Common myeloid progenitor, CD34-positive (primary cell): ENCODE measurements at regions of chr16 and their contacts with region 1.

Region 1: GRCh38 chr16:57576429-57576870 is 34.0 kb downstream of the ADGRG5 start:
- DNase-seq: peak; percentile 73 to 86 (median 79)
- H3K4me3 ChIP-seq: no peak overlapping the region
- H3K27ac ChIP-seq: no peak overlapping the region
- H3K4me1 ChIP-seq: peaks cover 0 to 48% (median 31%) of the 10 kb centered on the region in 4 experiments
- H3K27me3 ChIP-seq: no peaks in the 10 kb centered on the region

Region 2: DNA sequence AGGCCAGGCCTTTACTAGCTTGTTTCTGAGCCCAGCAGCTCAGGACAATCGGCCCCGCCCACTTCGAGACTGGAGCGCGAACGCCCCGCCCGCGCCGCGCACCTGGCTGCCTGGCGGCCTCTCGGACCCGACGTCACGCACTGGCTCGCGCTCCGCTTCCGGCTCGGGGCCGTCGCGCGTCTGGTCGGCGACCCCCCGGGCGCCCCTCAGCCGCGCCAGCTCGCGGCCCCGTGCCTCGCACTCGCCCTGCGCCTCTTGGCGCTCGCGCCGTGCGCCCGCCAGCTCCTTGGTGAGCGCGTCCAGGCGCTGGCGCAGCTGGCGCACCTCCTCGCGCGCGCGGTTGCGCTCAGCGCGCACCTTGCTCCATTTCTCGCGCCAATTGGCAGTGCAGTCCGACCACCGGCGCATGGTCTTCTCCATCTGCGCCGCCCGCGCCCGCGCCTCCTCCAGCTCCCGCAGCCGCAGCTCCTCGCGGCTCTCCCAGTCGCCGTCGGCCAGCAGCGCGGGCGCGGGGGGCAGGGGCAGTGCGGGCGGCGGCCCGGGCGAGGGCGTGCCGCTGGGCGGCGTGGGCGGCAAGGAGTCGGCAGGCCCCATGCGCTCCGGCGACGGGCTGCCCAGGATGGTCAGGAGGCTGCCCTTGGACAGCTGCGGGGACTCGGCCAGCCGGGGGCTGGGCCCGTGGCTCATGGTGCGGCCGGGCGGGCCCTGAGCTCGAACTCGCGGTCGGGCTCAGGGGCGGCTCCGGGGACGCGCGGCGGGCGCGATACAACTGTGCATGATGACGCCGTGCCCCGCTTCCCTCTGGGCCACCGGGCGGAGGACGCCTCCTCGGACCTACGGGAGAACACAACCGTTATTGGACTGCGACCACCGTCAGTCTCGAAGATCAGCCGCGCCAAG is 47.7 kb before region 1 on chr16:
- CTCF ChIA-PET with region 1: interaction called, 20 read pairs
- POLR2A ChIA-PET with region 1: no interaction called
- DNase-seq: no peak
- H3K4me3 ChIP-seq: peak overlapping the region in 1 of 7 experiments; percentile 11
- H3K27ac ChIP-seq: peak overlapping the region in 1 of 2 experiments; percentile 61
- H3K4me1 ChIP-seq: peaks cover 3 to 58% (median 56%) of the 10 kb centered on the region in 4 experiments
- H3K27me3 ChIP-seq: no peaks in the 10 kb centered on the region

Region 3: DNA sequence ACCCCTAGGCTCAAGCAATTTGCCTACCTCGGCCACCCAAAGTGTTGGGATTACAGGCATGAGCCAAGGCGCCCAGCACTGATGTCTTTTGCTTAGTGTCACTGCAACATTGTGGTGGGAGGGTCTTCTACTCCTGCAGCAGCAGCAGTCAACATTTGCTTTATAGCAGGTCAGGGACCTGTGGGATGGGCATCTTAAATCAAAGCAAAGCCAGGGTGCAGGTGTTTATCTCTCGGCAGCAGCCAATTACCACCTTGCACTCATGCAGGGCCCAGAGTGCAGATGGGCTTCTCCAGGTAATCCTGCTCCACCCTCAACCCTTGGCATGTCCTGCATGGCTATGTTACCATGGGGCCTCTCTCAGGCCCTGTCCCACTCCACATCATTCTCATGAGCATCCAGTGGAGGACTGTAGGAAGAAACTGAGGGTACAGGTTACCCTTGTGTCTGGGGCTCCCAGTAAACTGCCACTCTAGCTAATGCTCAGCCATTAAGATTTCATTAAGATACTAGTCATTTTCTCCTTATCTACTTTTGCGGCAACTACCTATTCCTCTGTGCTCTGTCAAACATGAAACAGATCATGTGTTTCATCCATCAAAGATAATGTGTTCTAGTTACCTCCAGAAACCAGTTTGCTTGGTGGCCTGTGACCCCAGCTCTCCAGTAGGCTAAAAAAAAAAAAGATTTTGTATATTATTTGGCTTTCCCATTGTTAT is 17.2 kb before region 1 on chr16:
- CTCF ChIA-PET with region 1: interaction called, 28 read pairs
- POLR2A ChIA-PET with region 1: no interaction called
- DNase-seq: no peak
- H3K4me3 ChIP-seq: no peak overlapping the region
- H3K27ac ChIP-seq: no peak overlapping the region
- H3K4me1 ChIP-seq: peaks cover 0 to 9% (median 4%) of the 10 kb centered on the region in 4 experiments
- H3K27me3 ChIP-seq: no peaks in the 10 kb centered on the region

Region 4: DNA sequence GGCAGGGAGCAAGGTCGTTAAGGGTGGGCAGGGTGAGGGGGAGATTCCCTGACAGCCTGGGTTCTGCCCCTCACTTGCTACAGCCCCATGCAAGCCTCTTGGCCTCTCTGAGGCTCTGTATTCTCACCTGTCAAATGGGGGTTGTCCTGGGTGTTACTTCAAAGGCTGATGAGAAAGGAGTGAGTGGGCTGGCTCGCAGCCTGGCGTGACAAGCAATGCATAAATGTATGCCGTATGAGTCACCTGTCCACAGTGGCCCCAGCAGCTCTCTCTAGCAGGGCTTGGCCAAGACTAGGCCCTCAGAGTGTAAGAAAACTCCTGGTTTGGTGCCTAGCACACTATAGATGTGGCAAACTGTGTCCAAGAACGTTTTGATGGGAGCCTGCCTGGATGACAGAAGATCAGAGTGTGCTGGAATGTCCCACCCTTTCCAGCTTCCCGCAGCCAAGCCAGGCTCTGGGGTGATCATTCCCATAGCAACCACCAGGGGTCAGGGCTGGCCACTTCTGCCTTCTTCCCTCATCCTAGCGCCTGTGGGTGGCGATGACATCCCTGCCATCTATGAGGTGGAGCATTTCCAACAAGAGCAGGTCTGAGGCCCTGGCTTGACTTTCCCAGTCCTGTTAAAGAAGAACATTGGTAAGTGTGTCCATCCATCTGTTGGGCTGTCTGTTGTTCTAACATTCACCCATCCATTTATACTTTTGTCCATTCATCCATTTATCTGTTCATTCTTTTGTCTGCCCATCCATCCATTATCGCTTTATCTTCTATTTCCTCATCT is 14.8 kb after region 1 on chr16:
- CTCF ChIA-PET with region 1: interaction called, 37 read pairs
- POLR2A ChIA-PET with region 1: interaction called, 3 read pairs
- DNase-seq: peak; percentile 73 to 85 (median 81)
- H3K4me3 ChIP-seq: peak overlapping the region in 1 of 7 experiments; percentile 14
- H3K27ac ChIP-seq: no peak overlapping the region
- H3K4me1 ChIP-seq: peaks cover 10 to 37% (median 34%) of the 10 kb centered on the region in 4 experiments
- H3K27me3 ChIP-seq: no peaks in the 10 kb centered on the region

Region 5: GRCh38 chr16:57609541-57610401 is 33.3 kb after region 1 on chr16:
- CTCF ChIA-PET with region 1: interaction called, 11 read pairs
- POLR2A ChIA-PET with region 1: no interaction called
- DNase-seq: peak in 2 of 3 donors; percentile 86 to 89
- H3K4me3 ChIP-seq: peak overlapping the region in 2 of 7 experiments; percentile 19 to 25
- H3K27ac ChIP-seq: no peak overlapping the region
- H3K4me1 ChIP-seq: peaks cover 17 to 70% (median 59%) of the 10 kb centered on the region in 4 experiments
- H3K27me3 ChIP-seq: no peaks in the 10 kb centered on the region

Region 6: DNA sequence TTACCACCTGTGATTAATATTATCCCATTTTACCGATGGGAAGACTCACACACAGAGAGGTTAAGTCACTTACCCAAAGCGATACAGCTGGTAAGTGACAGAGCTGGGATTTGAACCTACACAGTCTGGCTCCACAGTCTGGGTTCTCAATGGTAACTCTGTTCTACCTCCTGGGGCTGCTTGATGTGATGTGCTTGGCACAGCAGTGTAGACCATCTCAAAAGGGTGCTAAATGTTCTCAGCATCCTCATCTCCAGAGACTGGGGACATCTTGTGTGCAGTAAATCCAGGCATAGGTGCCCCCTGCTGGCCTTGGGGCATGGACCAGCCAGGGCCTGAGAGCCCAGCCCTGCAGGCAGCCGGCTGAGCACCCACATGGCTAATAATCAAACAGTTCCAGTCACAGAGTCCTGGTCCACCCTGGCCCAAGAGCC is 143.7 kb after region 1 on chr16:
- CTCF ChIA-PET with region 1: interaction called, 23 read pairs
- POLR2A ChIA-PET with region 1: no interaction called
- DNase-seq: peak; percentile 77 to 88 (median 85)
- H3K4me3 ChIP-seq: no peak overlapping the region
- H3K27ac ChIP-seq: no peak overlapping the region
- H3K4me1 ChIP-seq: peaks cover 0 to 39% (median 6%) of the 10 kb centered on the region in 4 experiments
- H3K27me3 ChIP-seq: no peaks in the 10 kb centered on the region

Region 7: GRCh38 chr16:57863434-57864160 is 287.1 kb after region 1 on chr16:
- CTCF ChIA-PET with region 1: interaction called, 12 read pairs
- POLR2A ChIA-PET with region 1: no interaction called
- DNase-seq: peak; percentile 44 to 46 (median 46)
- H3K4me3 ChIP-seq: no peak overlapping the region
- H3K27ac ChIP-seq: no peak overlapping the region
- H3K4me1 ChIP-seq: peaks cover 0 to 2% (median under 1%) of the 10 kb centered on the region in 4 experiments
- H3K27me3 ChIP-seq: no peaks in the 10 kb centered on the region

Region 8: DNA sequence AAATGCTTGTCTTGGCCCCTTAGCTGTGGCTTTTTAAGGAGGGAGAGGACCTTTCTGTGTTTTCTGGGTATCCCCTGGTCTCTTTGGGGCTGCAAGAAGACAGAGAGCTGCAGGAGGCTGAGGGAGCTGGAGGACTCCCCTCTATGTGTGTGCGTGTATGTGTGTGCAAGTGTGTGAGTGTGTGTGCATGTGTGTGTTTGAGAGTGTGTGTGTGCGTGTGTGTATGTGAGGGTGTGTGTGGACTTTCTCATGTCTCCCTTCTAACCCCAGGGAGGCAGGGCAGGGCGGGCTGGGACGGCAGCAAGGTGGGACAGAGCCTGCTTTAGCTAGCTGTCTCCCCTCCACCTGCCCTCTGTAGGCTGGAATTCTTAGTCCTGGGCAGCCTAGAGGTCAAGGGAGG is 716.4 kb after region 1 on chr16:
- CTCF ChIA-PET with region 1: no interaction called
- POLR2A ChIA-PET with region 1: no interaction called
- DNase-seq: no peak
- H3K4me3 ChIP-seq: no peak overlapping the region
- H3K27ac ChIP-seq: no peak overlapping the region
- H3K4me1 ChIP-seq: no peaks in the 10 kb centered on the region
- H3K27me3 ChIP-seq: no peaks in the 10 kb centered on the region